ENCODE measurements at regions of chr22 and their contacts with region 1.

Region 1: DNA sequence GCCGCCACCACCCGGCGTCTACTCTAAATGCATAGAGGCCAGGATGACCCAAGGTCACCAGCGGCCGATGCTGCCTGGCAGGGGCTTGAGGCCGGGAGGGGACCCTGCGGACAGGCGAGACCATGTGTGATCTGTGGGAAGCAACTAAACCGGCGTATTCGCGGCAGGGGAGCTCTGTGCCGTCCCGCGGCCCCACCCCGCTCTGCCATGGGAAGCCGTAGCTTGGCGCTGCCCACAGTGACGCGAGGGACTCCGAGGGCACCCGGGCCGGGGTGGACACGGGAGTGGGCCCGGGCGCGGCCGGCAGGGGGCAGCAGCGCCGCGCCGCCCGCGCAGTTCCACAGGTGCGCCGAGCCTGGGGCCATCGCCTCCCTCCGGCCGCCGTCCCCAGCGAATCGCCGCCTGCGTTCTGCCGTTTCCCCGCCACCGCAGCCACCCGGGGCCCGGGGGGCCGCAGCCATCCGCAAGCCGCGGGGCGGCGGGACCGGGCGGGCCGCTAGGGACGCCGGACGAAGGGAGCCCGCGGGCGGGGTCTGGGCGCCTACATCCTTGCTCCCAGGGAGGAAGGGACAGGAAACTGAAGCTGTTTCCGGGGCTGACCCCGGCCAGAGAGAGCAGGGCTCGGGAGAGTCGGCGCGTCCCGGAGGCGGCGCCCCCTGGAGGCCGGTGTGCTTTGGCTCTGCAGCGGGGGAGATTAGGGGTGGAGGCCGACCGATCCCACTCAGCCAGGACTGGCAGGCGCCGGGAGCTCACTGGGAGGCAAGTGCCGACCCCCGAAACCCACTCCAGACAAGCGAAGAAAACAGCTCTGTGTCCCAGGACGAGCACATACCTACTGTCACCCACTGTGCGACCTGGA is 12.5 kb upstream of the HDHD5 start:
- DNase-seq: peak; percentile 93 to 95
- ATAC-seq: peak; percentile 90 to 96 (median 94)
- H3K4me3 ChIP-seq: peak overlapping the region; percentile 29 to 74 (median 65)
- H3K27ac ChIP-seq: peak overlapping the region; percentile 89 to 99 (median 96)
- H3K4me1 ChIP-seq: peaks cover 0 to 37% (median 14%) of the 10 kb centered on the region in 9 donors
- H3K27me3 ChIP-seq: no peaks in the 10 kb centered on the region
- CTCF ChIP-seq: peak; percentile 63 to 97 (median 78)

Region 2: GRCh38 chr22:17063411-17064106 is 108.0 kb before region 1 on chr22:
- intact Hi-C with region 1: no loop called
- DNase-seq: peak in 1 of 2 donors; percentile 23
- ATAC-seq: peak in 7 of 8 donors; percentile 22 to 87 (median 61)
- H3K4me3 ChIP-seq: no peak overlapping the region
- H3K27ac ChIP-seq: peak overlapping the region in 7 of 10 donors; percentile 12 to 56 (median 37)
- H3K4me1 ChIP-seq: peaks cover 0 to 26% (median 9%) of the 10 kb centered on the region in 9 donors
- H3K27me3 ChIP-seq: peaks cover 0 to 4% (median 0%) of the 10 kb centered on the region in 7 donors
- CTCF ChIP-seq: peak in 1 of 9 donors; percentile 18

Region 3: DNA sequence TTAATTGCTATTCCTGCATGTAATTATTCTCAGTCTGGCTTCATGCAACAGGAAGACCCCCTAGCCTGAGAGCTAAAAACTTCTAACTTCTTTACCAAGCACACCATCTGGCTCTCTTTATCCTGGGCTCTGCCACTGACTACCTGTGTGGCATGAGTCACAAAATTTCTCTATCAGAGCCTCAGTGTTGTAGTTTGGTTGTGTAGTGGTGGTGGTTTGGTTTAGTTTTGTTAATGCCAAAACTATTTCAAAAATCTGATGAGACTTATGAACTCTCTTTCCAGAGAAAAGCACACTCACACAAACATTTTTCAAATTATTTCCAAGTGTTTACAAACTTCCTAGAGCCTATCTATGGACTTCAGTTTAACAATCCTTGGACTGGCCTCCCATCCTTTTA is 94.3 kb before region 1 on chr22:
- intact Hi-C with region 1: loop called in 8 of 10 experiments (anchors 5 to 10 kb)
- DNase-seq: no peak
- ATAC-seq: no peak
- H3K4me3 ChIP-seq: no peak overlapping the region
- H3K27ac ChIP-seq: no peak overlapping the region
- H3K4me1 ChIP-seq: peaks cover 0 to 18% (median 0%) of the 10 kb centered on the region in 9 donors
- H3K27me3 ChIP-seq: peaks cover 0 to 3% (median 0%) of the 10 kb centered on the region in 7 donors
- CTCF ChIP-seq: no peak

Region 4: DNA sequence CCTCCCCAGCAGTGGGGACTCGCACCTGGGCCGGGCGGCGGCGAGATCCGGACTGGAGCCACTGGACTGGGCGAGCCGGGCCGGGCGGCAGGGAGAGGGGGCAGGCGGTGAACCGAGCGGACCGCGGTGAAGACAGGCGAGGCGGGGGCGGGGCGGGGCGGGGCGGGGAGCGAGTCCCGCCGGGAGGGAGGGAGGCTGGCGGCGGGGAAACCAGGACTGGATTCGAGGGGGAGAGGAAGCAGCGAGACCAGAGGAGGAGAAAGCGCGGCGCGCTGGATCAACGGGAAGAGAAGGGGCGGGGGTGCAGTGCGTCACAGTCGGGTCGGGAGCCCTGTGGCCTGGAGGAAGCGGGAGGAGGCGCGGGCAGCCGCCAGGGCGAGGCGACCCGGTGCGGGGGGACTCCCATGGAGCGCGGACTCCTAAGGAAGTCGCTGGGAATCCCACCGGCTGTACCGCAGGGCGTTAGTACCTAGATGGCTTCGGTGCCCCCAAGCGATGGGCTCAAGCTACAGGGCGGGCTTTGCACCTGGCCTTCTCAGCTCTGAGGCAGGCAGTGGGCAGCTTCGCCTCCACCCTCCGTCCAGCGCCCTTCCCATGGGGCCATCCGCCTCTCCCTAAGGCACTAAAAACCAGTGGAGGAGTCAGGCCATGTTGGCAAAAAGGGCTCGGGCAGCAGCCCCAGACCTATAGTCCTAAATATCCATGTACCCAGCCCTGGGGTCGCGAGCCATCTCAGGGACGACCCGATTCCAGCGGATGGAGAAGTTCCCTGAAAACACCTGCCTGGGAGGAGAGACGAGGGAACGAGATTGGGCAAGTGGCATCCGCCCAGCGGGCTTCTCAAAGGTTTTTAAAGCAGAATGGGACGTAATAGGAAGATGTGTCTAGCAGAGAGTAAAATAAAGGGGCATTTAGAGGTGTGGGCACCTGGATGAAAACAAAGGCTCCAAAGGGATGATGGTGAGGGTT is 50.0 kb before region 1 on chr22 and contains the start of gene TMEM121B:
- intact Hi-C with region 1: loop called in 5 of 10 experiments (anchors 5 to 10 kb)
- DNase-seq: peak; percentile 79 to 85
- ATAC-seq: peak; percentile 77 to 93 (median 86)
- H3K4me3 ChIP-seq: peak within 1 kb of the TSS; percentile 58 to 80 (median 68)
- H3K27ac ChIP-seq: peak within 1 kb of the TSS in 8 of 10 donors; percentile 39 to 82 (median 68)
- H3K4me1 ChIP-seq: peaks cover 3 to 42% (median 23%) of the 10 kb centered on the region in 9 donors
- H3K27me3 ChIP-seq: peaks cover 0 to 31% (median 0%) of the 10 kb centered on the region in 7 donors
- CTCF ChIP-seq: no peak
- total RNA-seq, gene TMEM121B: 1.2 to 3.3 (median 1.9) TPM

Region 5: GRCh38 chr22:17199003-17199731 is 27.6 kb after region 1 on chr22:
- intact Hi-C with region 1: loop called in 3 of 10 experiments (anchors 1 kb)
- DNase-seq: peak in 1 of 2 donors; percentile 80
- ATAC-seq: peak; percentile 70 to 87 (median 78)
- H3K4me3 ChIP-seq: peak overlapping the region; percentile 24 to 63 (median 50)
- H3K27ac ChIP-seq: peak overlapping the region; percentile 77 to 97 (median 88)
- H3K4me1 ChIP-seq: peaks cover 0 to 25% (median 15%) of the 10 kb centered on the region in 9 donors
- H3K27me3 ChIP-seq: peaks cover 0 to 5% (median 0%) of the 10 kb centered on the region in 7 donors
- CTCF ChIP-seq: no peak

Region 6: DNA sequence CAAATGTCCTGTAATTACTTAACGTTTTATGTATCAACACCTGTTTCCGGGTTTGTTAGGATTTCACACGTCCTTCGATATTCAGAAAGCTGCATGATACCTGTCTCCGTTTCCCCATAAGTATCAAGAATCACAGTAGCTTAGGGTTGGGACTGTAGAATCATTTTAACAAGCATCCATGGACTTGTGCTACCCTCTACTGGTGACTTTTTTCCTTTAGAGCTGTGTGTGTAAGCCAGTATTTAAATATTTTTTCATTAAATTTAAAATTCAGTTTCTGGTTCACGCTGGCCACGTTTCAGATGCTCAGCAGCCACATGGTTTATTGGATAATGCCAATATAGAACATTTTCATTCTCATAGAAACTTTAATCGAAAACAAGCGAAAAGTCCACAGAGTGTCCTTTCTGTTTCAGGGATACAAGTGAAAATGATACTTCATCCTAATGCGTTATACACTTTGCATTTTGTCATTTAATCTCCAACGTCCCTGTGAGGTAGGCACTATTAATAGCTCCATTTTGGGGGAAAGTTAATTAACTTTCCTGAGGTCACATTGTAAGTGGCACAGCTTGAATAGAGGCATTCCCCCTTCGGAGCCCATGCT is 330.2 kb after region 1 on chr22:
- intact Hi-C with region 1: loop called in 7 of 10 experiments (anchors 1 to 10 kb)
- DNase-seq: peak in 1 of 2 donors; percentile 50
- ATAC-seq: peak; percentile 78 to 93 (median 89)
- H3K4me3 ChIP-seq: no peak overlapping the region
- H3K27ac ChIP-seq: no peak overlapping the region
- H3K4me1 ChIP-seq: peaks cover 0 to 7% (median 0%) of the 10 kb centered on the region in 9 donors
- H3K27me3 ChIP-seq: no peaks in the 10 kb centered on the region
- CTCF ChIP-seq: peak; percentile 42 to 83 (median 68)

Measured in heart right ventricle (tissue), 16 donors.